Activated CD4-positive, alpha-beta memory T cell treated with anti-CD3 and anti-CD28 coated beads for 36 hours (primary cell): ENCODE measurements at regions of chr10 and their contacts with region 1.

Region 1: GRCh38 chr10:110746254-110746826 is 102.2 kb downstream of the RBM20 start:
- DNase-seq: peak; percentile 57
- H3K4me3 Mint-ChIP-seq: no peak overlapping the region
- H3K27ac Mint-ChIP-seq: no peak overlapping the region
- H3K4me1 Mint-ChIP-seq: peaks cover 54% of the 10 kb centered on the region
- H3K27me3 Mint-ChIP-seq: no peaks in the 10 kb centered on the region

Region 2: GRCh38 chr10:110774069-110775019 is 28.0 kb after region 1 on chr10:
- CTCF ChIA-PET with region 1: interaction called, 5 read pairs
- POLR2A ChIA-PET with region 1: interaction called, 4 read pairs
- intact Hi-C with region 1: loop called (anchors 1 kb)
- DNase-seq: peak; percentile 69
- H3K4me3 Mint-ChIP-seq: peak overlapping the region; percentile 42
- H3K27ac Mint-ChIP-seq: peak overlapping the region; percentile 79
- H3K4me1 Mint-ChIP-seq: peaks cover 40% of the 10 kb centered on the region
- H3K27me3 Mint-ChIP-seq: no peaks in the 10 kb centered on the region

Region 3: GRCh38 chr10:110893559-110894179 is 147.3 kb after region 1 on chr10:
- CTCF ChIA-PET with region 1: interaction called, 51 read pairs
- POLR2A ChIA-PET with region 1: no interaction called
- intact Hi-C with region 1: loop called (anchors 1 kb)
- DNase-seq: no peak
- H3K4me3 Mint-ChIP-seq: no peak overlapping the region
- H3K27ac Mint-ChIP-seq: peak overlapping the region; percentile 4
- H3K4me1 Mint-ChIP-seq: peaks cover 47% of the 10 kb centered on the region
- H3K27me3 Mint-ChIP-seq: no peaks in the 10 kb centered on the region

Region 4: DNA sequence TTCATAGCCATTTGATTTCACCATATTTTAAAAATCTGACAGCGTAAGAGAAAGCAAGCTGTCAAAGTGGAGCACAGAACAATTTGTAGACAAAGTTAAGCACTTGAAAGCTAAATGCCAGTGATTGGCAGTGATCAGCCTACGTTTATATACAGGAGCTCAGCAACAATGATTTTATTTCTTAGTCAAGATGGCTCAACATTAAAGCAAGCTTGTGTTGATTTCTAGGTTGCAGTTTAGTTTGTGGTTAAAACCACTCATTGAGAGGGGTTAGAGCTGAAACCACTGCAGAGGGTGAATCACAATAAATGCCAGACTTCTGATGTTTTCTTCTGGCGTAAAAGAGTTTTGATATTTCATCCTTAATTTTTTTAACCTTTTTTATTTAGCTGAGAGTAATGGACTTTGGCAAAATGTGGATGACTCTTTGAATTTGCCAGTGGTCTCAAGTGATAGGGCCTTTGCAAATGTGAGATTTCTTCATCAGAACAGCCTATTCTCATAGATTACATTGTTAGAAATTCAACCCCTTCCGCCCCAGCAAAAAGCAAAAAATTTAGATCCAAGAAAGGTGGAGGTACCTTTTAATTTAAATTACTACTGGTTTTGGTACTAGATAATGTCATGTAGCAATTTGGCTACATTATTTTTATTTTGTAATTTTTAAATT is 246.8 kb after region 1 on chr10:
- CTCF ChIA-PET with region 1: no interaction called
- POLR2A ChIA-PET with region 1: no interaction called
- intact Hi-C with region 1: loop called (anchors 2 kb)
- DNase-seq: no peak
- H3K4me3 Mint-ChIP-seq: no peak overlapping the region
- H3K27ac Mint-ChIP-seq: no peak overlapping the region
- H3K4me1 Mint-ChIP-seq: peaks cover 28% of the 10 kb centered on the region
- H3K27me3 Mint-ChIP-seq: no peaks in the 10 kb centered on the region

Region 5: DNA sequence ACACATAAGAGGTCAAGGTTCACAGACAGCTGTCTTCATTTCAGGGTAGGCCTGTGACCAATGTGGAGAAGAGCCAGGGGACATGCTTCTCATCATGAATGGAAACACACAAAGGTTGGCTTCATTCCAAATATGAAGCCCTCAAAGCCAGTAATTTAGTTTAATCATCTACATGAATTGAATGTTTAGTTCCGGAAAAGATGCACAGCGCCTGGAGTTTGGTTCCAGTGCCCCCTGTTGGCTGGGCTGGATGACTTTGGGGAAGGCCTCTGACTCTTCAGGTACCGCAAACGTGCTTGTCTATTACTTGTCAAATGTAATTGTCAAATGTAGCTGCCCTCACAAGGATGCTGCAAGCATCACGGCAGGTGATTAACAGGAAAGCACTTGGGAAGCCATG is 461.2 kb after region 1 on chr10:
- CTCF ChIA-PET with region 1: no interaction called
- POLR2A ChIA-PET with region 1: no interaction called
- intact Hi-C with region 1: loop called (anchors 2 kb)
- DNase-seq: peak; percentile 48
- H3K4me3 Mint-ChIP-seq: no peak overlapping the region
- H3K27ac Mint-ChIP-seq: no peak overlapping the region
- H3K4me1 Mint-ChIP-seq: no peaks in the 10 kb centered on the region
- H3K27me3 Mint-ChIP-seq: peaks cover 5% of the 10 kb centered on the region